HEK293 (cell line): ENCODE measurements at regions of chr14 and their contacts with region 1.

Region 1: DNA sequence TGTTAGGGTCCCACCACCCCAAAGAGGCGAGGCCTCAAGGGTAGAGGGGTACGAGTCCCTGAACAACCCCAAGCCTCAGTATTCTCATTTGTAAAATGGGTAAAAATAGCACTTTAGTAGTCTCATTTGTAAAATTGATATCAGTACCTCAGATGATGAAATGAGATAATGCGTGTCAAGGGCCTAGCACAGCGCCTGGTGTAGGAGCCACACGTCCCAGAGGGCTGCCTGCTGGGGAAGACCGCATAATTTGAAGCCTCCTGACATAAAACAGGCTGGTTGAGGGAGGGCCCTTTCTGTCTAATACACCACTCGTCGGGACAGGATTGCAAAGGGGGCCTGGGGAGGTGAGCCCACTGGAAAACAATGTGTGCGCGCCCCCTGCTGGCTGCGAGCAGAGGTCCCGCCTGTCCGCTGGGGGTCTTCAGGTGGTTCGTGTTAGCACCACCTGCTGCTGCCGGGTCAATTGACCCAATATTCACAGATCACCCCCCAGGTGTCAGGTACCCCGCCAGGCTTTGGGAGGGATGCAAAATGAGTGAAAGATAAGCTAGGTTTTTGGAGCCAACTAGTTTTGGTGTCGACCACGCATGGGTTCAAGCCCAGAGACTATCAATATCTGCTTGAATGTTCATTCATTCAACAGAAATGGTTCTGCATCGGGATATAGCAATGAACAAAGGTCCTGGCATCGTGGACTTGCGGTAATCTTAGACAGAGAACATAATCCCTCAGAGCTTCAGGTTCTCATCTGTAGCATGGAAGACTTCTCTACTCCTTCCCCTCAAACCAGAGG is 24.7 kb upstream of the IRF2BPL start:
- H3K4me3 ChIP-seq: no peak overlapping the region
- H3K27ac ChIP-seq: peak overlapping the region; percentile 20; the same call in 1 of the 2 replicates
- H3K4me1 ChIP-seq: peaks cover 4% of the 10 kb centered on the region; the same call in 1 of the 2 replicates
- CTCF ChIP-seq: peak; percentile 87

Region 2: GRCh38 chr14:76904740-76905438 is 148.4 kb before region 1 on chr14:
- CTCF ChIA-PET with region 1: interaction called, 83 read pairs
- POLR2A ChIA-PET with region 1: no interaction called
- H3K4me3 ChIP-seq: no peak overlapping the region
- H3K27ac ChIP-seq: peak overlapping the region; percentile 49; the same call in 1 of the 2 replicates
- H3K4me1 ChIP-seq: peaks cover 15% of the 10 kb centered on the region
- CTCF ChIP-seq: no peak

Region 3: DNA sequence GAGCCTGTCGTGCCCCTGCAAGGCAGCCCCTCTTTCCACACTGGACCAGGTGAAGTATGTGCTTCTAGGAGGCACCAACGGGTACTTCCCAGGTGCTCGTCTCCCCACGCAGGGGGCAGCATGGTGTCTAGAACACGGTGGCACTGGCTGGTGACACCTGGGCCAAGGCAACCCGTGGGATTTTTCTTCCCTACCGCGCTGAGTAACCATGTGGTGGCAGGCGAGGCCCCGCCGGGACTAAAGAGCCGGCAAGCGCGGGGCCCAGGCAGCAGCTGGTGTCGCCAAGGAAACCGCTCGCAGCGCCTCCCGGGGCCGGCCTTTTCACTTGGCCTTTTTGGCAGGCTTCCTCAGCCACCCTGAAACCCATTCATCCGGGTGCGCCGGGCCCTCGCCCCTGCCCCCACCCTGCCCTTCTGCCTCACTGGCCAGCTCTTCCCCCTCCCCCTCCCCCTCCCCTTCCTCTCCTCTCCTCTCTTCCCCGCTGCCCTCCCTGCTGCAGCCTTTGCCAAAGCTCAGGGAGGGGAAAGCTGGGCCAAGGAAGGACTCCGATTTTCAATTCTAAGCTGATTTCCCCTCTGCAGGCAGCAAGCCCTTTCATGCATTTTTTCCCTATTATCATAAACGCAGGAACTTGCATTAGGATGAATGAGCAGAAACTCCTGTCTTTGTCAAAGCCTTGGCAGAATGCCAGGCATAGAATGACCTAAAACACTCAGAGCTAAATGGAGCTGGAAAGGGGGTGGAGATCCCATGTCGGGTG is 106.0 kb before region 1 on chr14:
- CTCF ChIA-PET with region 1: interaction called, 9 read pairs
- POLR2A ChIA-PET with region 1: interaction called, 10 read pairs
- H3K4me3 ChIP-seq: no peak overlapping the region
- H3K27ac ChIP-seq: peak overlapping the region; percentile 93
- H3K4me1 ChIP-seq: peaks cover 23% of the 10 kb centered on the region
- CTCF ChIP-seq: peak; percentile 58; the same call in 1 of the 2 replicates

Region 4: DNA sequence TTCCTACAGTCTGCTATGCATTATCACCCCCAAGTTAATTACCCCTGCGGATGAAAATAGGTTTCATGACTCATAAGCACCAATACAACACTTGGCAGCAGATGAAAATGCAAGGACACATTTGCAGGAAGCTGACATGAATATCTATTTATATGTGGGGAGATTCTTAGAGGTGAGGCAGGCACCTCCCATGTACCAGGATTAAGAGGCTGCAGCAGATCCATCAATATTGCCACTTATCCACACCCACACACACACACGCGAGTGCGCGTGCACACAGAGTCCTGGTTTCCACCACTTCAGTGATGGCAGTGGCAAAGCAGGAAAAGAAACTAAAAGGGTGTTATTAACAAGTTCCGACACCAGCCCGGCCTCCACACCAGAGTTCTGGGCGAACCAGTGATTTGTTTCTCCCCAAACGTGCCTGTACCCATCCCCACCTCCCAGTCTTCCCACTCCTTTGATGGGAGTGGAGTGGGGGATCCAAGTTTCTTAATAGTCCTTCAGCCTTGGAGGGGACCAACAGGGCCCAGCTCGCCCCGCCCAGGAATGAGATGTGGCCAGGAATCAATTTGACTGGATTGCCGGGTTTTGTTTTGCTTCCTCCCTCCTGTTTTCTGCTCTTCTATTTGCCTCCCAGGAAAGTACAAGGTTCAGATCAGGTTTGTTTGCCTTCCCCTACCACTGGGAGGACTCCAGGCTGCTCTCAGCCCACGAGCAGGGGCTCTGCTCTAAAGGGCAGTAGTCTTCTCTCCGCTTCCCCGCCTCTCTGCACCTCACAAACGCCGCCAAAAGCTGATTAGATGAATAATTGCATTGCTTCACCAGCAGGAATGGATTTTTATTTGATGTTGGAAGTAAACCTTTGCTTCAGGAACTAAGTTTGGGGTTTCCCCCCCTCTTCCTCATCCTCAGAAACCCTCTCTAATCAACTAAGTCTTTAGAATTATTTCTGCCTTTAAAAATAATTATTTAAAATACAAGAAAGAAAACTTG is 29.9 kb before region 1 on chr14:
- CTCF ChIA-PET with region 1: interaction called, 15 read pairs
- POLR2A ChIA-PET with region 1: interaction called, 3 read pairs
- H3K4me3 ChIP-seq: no peak overlapping the region
- H3K27ac ChIP-seq: peak overlapping the region; percentile 100
- H3K4me1 ChIP-seq: peaks cover 10% of the 10 kb centered on the region
- CTCF ChIP-seq: no peak

Region 5: GRCh38 chr14:77040059-77040740 is 13.0 kb before region 1 on chr14:
- CTCF ChIA-PET with region 1: interaction called, 19 read pairs
- POLR2A ChIA-PET with region 1: no interaction called
- H3K4me3 ChIP-seq: peak overlapping the region; percentile 29
- H3K27ac ChIP-seq: peak overlapping the region; percentile 97
- H3K4me1 ChIP-seq: peaks cover 69% of the 10 kb centered on the region
- CTCF ChIP-seq: no peak